A549 (cell line): ENCODE measurements at regions of chr20 and their contacts with region 1.

Region 1: GRCh38 chr20:62616728-62617621 is 25.3 kb upstream of the SLCO4A1 start:
- DNase-seq: peak; percentile 71 to 85
- ATAC-seq: peak; percentile 92 to 99
- H3K4me3 ChIP-seq: no peak overlapping the region
- H3K27ac ChIP-seq: no peak overlapping the region
- H3K4me1 ChIP-seq: peaks cover 16% of the 10 kb centered on the region; the same call in 2 of the 3 replicates
- CTCF ChIP-seq: peak; percentile 87
- EP300 ChIP-seq: no peak
- POLR2A ChIP-seq: no peak
- RAD21 ChIP-seq: peak; percentile 93

Region 2: DNA sequence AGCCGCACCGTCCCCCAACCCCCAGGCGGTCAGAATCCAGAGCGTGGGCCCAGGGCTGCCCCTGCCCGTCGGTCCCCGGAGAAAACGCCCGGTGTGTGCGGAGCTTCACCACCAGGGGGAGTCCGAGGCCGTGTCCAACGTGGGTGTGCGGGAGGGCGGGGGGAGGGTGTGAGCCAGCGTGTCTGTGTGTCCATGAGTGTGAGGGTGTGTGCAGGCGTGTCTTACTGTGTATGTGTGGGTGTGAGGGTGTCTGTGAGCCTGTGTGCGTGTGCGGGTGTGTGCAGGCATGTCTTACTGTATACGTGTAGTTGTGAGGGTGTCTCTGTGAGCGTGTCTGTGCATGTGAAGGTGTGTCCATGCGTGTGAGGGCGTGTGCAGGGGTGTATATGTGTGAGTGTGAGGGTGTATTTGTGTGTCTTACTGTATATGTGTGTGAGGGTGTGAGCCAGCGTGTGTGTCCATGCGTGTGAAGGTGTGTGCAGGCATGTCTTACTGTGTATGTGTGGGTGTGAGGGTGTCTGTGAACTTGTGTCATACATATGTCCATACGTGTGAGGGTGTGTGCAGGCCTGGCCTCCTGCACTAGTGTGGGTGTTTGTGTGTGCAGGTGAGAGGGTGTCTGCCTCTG is 116.6 kb before region 1 on chr20:
- CTCF ChIA-PET with region 1: interaction called, 29 read pairs
- POLR2A ChIA-PET with region 1: no interaction called
- DNase-seq: peak; percentile 40 to 80
- ATAC-seq: peak; percentile 55 to 77; a peak in 5 of 6 replicates
- H3K4me3 ChIP-seq: no peak overlapping the region
- H3K27ac ChIP-seq: no peak overlapping the region
- H3K4me1 ChIP-seq: peaks cover 14% of the 10 kb centered on the region
- CTCF ChIP-seq: peak; percentile 76
- EP300 ChIP-seq: no peak
- POLR2A ChIP-seq: no peak
- RAD21 ChIP-seq: peak; percentile 74 to 75

Region 3: GRCh38 chr20:62522748-62523396 is 94.1 kb before region 1 on chr20:
- CTCF ChIA-PET with region 1: interaction called, 63 read pairs
- POLR2A ChIA-PET with region 1: no interaction called
- DNase-seq: no peak
- ATAC-seq: no peak
- H3K4me3 ChIP-seq: no peak overlapping the region
- H3K27ac ChIP-seq: no peak overlapping the region
- H3K4me1 ChIP-seq: no peaks in the 10 kb centered on the region
- CTCF ChIP-seq: no peak
- EP300 ChIP-seq: no peak
- POLR2A ChIP-seq: no peak
- RAD21 ChIP-seq: no peak

Region 4: DNA sequence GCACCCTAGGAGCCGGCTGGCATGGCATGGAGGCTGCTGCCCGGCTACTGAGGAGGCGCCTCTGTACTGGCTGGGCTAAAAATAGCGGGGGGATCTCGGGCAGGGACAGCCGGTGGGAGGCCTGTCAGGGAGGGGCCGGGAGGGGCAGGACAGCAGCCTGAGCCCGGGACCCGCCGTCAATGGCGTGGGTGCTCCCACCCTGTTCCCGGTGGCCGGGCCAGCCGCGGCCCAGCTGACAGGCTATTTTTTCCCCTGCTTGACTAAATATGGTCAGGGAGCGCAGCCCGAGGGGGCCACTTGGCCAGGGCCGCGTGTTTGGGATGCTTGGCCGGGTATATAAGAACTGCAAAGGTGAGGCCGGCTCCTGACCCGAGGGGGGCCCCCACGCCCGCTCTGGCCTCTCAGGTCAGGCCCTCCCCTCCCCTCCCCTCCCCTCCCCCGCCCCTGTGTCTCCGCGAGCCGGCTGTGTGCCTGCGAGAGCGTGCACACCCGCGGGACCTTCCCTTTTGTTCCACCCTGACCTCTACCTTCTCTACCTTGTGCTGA is 66.8 kb before region 1 on chr20:
- CTCF ChIA-PET with region 1: interaction called, 14 read pairs
- POLR2A ChIA-PET with region 1: no interaction called
- DNase-seq: peak in 1 of 2 experiments; percentile 20
- ATAC-seq: peak; percentile 25 to 71; a peak in 4 of 6 replicates
- H3K4me3 ChIP-seq: peak overlapping the region; percentile 46
- H3K27ac ChIP-seq: peak overlapping the region in 1 of 2 experiments; percentile 31; a peak in 3 of 6 replicates
- H3K4me1 ChIP-seq: peaks cover 20% of the 10 kb centered on the region
- CTCF ChIP-seq: no peak
- EP300 ChIP-seq: no peak
- POLR2A ChIP-seq: no peak
- RAD21 ChIP-seq: no peak

Region 5: GRCh38 chr20:62595491-62595890 is 21.5 kb before region 1 on chr20:
- CTCF ChIA-PET with region 1: interaction called, 25 read pairs
- POLR2A ChIA-PET with region 1: no interaction called
- DNase-seq: peak; percentile 66 to 81
- ATAC-seq: peak; percentile 71 to 81
- H3K4me3 ChIP-seq: 0 out of 3 replicates have a peak overlapping the region, but pooled peaks have one; percentile 14
- H3K27ac ChIP-seq: peak overlapping the region in 1 of 2 experiments; percentile 57; a peak in 2 of 6 replicates
- H3K4me1 ChIP-seq: peaks cover 21% of the 10 kb centered on the region
- CTCF ChIP-seq: no peak
- EP300 ChIP-seq: no peak
- POLR2A ChIP-seq: no peak
- RAD21 ChIP-seq: no peak

Region 6: DNA sequence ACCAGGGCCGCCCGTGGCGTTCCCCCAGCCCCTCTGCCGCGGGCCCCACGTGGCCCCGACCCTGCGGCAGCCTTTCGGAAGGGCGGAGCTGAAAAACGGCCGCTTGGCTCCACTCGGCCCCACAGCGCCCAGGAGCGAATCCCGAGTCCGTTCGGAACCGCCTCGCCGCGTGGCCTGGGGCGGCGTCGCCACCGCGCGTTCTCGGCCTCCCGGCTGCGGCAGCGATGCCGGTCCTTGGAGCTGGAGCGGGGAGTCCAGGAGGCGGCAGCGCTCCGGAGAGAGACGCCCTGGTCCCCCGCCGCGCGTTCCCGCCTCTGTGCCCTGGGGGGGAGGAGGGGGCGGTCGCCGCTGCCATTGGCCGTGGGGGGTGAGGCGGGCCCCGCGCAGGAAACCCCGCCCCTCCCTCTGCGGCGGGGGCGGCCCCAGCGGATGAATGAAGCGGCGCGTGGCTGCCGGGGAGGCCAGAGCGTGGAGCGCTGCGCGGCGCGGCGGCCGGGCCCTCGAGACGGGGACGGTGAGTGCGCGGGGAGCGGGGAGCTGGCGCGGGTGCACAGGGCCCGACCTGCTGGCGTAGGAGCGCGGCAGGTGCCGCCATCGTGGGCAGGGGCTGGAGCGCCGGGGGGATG is 25.2 kb after region 1 on chr20 and contains the start of gene SLCO4A1:
- CTCF ChIA-PET with region 1: interaction called, 15 read pairs
- POLR2A ChIA-PET with region 1: no interaction called
- DNase-seq: peak; percentile 64 to 81
- ATAC-seq: peak; percentile 63 to 83
- H3K4me3 ChIP-seq: peak within 1 kb of the TSS; percentile 76
- H3K27ac ChIP-seq: peak within 1 kb of the TSS; percentile 73 to 90
- H3K4me1 ChIP-seq: 0 out of 3 replicates have a peak, but pooled peaks cover 5% of the 10 kb centered on the region
- CTCF ChIP-seq: no peak
- EP300 ChIP-seq: no peak
- POLR2A ChIP-seq: peak; percentile 45
- RAD21 ChIP-seq: no peak
- polyA plus RNA-seq, gene SLCO4A1: 1.3 and 2.1 TPM in 2 replicates